Activated CD4-positive, alpha-beta T cell treated with anti-CD3 and anti-CD28 coated beads, Interleukin-2, amount 10 ng/mL, durations not matched to agents 24 days and 14 days (primary cell): ENCODE measurements at regions of chr22 and their contacts with region 1.

Region 1: GRCh38 chr22:40323681-40324171 is 22.6 kb upstream of the ADSL start:
- DNase-seq: peak; percentile 81
- H3K4me3 Mint-ChIP-seq: peak overlapping the region; percentile 81
- H3K27ac Mint-ChIP-seq: peak overlapping the region; percentile 99
- H3K4me1 Mint-ChIP-seq: peaks cover 60% of the 10 kb centered on the region
- H3K27me3 Mint-ChIP-seq: no peaks in the 10 kb centered on the region

Region 2: DNA sequence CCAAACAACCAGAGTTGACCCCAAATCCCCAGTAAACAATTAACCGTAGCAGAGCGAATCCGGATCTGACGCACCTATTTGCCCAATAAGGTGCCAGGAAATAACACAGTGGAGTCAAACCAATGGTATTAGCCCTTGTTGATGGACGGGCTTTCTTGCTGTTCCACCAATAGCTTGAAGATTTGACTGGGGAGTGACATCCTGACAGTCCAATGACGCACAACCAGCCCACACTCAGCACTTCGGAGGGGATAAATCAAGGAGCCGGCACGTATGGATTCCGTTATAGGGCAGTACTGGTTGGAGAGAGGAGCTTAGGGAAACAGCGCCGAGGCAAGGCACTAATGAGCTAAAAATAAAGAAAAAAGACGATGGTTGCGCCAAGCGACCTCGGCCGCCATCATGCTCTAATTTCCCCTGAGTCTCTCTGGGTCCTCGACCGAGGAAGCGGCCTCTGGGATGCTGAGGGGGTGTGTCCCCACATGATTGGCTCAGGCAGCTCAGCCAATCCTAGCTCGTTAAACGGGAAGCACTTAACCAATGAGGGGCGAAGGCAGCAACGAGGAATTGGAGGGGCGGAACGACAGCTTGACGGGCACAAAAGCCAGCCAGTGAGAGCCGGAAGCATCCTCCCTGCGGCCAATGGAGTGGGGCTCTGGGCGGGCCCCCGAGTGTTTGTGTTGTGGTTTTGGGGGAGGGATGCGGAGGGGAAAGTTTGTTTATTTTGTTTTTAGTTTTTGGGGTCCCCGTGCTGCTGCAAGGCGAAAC is 279.4 kb before region 1 on chr22:
- intact Hi-C with region 1: loop called (anchors 1 kb)
- DNase-seq: peak; percentile 100
- H3K4me3 Mint-ChIP-seq: peak overlapping the region; percentile 92
- H3K27ac Mint-ChIP-seq: peak overlapping the region; percentile 99
- H3K4me1 Mint-ChIP-seq: peaks cover 14% of the 10 kb centered on the region
- H3K27me3 Mint-ChIP-seq: peaks cover 9% of the 10 kb centered on the region

Region 3: GRCh38 chr22:40203572-40203971 is 120.2 kb before region 1 on chr22:
- intact Hi-C with region 1: loop called (anchors 2 kb)
- DNase-seq: peak; percentile 83
- H3K4me3 Mint-ChIP-seq: peak overlapping the region; percentile 66
- H3K27ac Mint-ChIP-seq: peak overlapping the region; percentile 81
- H3K4me1 Mint-ChIP-seq: peaks cover 37% of the 10 kb centered on the region
- H3K27me3 Mint-ChIP-seq: no peaks in the 10 kb centered on the region

Region 4: GRCh38 chr22:40238425-40239344 is 85.0 kb before region 1 on chr22:
- intact Hi-C with region 1: no loop called
- DNase-seq: no peak
- H3K4me3 Mint-ChIP-seq: no peak overlapping the region
- H3K27ac Mint-ChIP-seq: peak overlapping the region; percentile 55
- H3K4me1 Mint-ChIP-seq: peaks cover 56% of the 10 kb centered on the region
- H3K27me3 Mint-ChIP-seq: no peaks in the 10 kb centered on the region

Region 5: GRCh38 chr22:40250608-40251007 is 73.1 kb before region 1 on chr22:
- intact Hi-C with region 1: loop called (anchors 2 kb)
- DNase-seq: no peak
- H3K4me3 Mint-ChIP-seq: no peak overlapping the region
- H3K27ac Mint-ChIP-seq: peak overlapping the region; percentile 59
- H3K4me1 Mint-ChIP-seq: peaks cover 43% of the 10 kb centered on the region
- H3K27me3 Mint-ChIP-seq: no peaks in the 10 kb centered on the region

Region 6: DNA sequence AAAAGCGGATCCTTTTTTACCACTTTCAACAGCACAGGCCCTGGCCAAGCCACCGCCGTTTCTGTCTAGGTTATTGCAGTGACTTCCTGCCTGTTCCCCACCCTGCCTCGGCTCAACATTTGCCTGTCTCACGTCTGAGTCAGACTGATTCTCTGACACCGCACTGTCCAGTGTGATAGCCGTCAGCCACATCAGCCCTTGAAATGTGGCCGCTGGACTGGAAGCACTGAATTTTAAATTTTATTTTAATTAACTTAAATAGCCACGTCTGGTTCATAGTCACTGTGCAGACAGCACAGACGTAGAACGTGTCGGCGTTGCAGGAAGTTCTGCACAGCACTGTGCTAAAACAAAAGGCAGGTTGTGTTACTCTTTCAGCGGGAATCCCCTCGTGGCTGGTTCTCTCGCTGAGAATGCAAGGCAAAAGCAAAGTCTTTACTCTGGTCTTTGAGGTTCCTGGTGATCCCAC is 33.7 kb before region 1 on chr22:
- intact Hi-C with region 1: loop called (anchors 1 kb)
- DNase-seq: peak; percentile 90
- H3K4me3 Mint-ChIP-seq: peak overlapping the region; percentile 79
- H3K27ac Mint-ChIP-seq: peak overlapping the region; percentile 93
- H3K4me1 Mint-ChIP-seq: peaks cover 43% of the 10 kb centered on the region
- H3K27me3 Mint-ChIP-seq: no peaks in the 10 kb centered on the region

Region 7: GRCh38 chr22:41301105-41302020 is 977.6 kb after region 1 on chr22 and contains the start of gene ZC3H7B:
- intact Hi-C with region 1: no loop called
- DNase-seq: peak; percentile 95
- H3K4me3 Mint-ChIP-seq: peak within 1 kb of the TSS; percentile 82
- H3K27ac Mint-ChIP-seq: peak within 1 kb of the TSS; percentile 86
- H3K4me1 Mint-ChIP-seq: peaks cover 26% of the 10 kb centered on the region
- H3K27me3 Mint-ChIP-seq: no peaks in the 10 kb centered on the region
- total RNA-seq, gene ZC3H7B: 69.1 and 70.5 TPM in 2 replicates